CD8-positive, alpha-beta T cell (primary cell): ENCODE measurements at regions of chr1 and their contacts with region 1.

Region 1: GRCh38 chr1:27662707-27663393 is 9.1 kb downstream of the IFI6 start:
- DNase-seq: peak; percentile 82 to 96 (median 90)
- ATAC-seq: peak; percentile 72
- H3K4me3 ChIP-seq: peak overlapping the region; percentile 50 to 59
- H3K4me3 Mint-ChIP-seq: peak overlapping the region; percentile 81
- H3K27ac ChIP-seq: peak overlapping the region; percentile 87 to 95
- H3K27ac Mint-ChIP-seq: peak overlapping the region; percentile 97
- H3K4me1 ChIP-seq: peaks cover 46% of the 10 kb centered on the region
- H3K4me1 Mint-ChIP-seq: peaks cover 46% of the 10 kb centered on the region
- H3K27me3 ChIP-seq: no peaks in the 10 kb centered on the region
- H3K27me3 Mint-ChIP-seq: no peaks in the 10 kb centered on the region
- CTCF ChIP-seq: peak; percentile 74

Region 2: GRCh38 chr1:27201295-27201694 is 461.6 kb before region 1 on chr1:
- CTCF ChIA-PET with region 1: no interaction called
- POLR2A ChIA-PET with region 1: no interaction called
- intact Hi-C with region 1: no loop called
- DNase-seq: no peak
- ATAC-seq: no peak
- H3K4me3 ChIP-seq: no peak overlapping the region
- H3K4me3 Mint-ChIP-seq: no peak overlapping the region
- H3K27ac ChIP-seq: no peak overlapping the region
- H3K27ac Mint-ChIP-seq: no peak overlapping the region
- H3K4me1 ChIP-seq: no peaks in the 10 kb centered on the region
- H3K4me1 Mint-ChIP-seq: peaks cover 4% of the 10 kb centered on the region
- H3K27me3 ChIP-seq: no peaks in the 10 kb centered on the region
- H3K27me3 Mint-ChIP-seq: no peaks in the 10 kb centered on the region
- CTCF ChIP-seq: no peak

Region 3: GRCh38 chr1:27300341-27301051 is 362.4 kb before region 1 on chr1:
- CTCF ChIA-PET with region 1: interaction called, 6 read pairs
- POLR2A ChIA-PET with region 1: interaction called, 3 read pairs
- intact Hi-C with region 1: loop called in 1 of 2 experiments (anchors 5 kb)
- DNase-seq: peak; percentile 60 to 90 (median 74)
- ATAC-seq: peak; percentile 99
- H3K4me3 ChIP-seq: no peak overlapping the region
- H3K4me3 Mint-ChIP-seq: no peak overlapping the region
- H3K27ac ChIP-seq: no peak overlapping the region
- H3K27ac Mint-ChIP-seq: no peak overlapping the region
- H3K4me1 ChIP-seq: no peaks in the 10 kb centered on the region
- H3K4me1 Mint-ChIP-seq: peaks cover 6% of the 10 kb centered on the region
- H3K27me3 ChIP-seq: no peaks in the 10 kb centered on the region
- H3K27me3 Mint-ChIP-seq: no peaks in the 10 kb centered on the region
- CTCF ChIP-seq: peak; percentile 84

Region 4: DNA sequence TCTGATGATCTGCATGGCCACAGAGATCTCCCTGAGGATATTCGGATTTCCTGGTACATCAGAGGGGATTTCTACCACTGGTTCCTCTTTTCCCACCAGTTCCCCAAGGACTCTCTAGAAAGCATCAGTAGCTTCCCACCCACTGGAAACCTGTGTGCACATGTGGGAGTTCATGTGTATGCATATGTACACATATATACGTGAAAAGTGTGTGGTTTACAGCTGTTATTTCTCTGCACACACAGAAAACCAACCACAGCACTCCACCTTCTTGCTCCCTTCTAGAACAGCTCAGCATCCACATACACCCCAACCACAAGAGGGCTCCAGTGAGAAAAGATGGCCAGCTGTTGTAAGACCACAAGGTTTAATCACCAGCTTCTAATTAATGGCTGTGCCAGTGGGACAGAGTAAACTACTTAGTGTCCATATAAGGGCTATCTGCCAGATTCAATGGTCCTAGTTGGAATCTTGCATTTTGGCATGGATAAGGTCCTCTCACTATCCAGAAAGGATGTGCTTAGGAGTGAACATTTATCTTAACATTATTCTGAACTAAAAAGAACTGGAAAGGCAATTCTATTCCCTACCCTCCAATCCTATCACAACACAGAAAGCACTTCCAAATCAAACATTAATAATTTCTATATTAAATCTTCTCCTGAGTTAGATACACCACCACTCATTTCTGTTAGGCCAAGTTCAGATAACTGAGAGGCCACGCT is 246.3 kb before region 1 on chr1:
- CTCF ChIA-PET with region 1: interaction called, 3 read pairs
- POLR2A ChIA-PET with region 1: no interaction called
- intact Hi-C with region 1: loop called (anchors 1 kb)
- DNase-seq: peak in 6 of 9 experiments; percentile 30 to 81 (median 57)
- ATAC-seq: peak; percentile 74
- H3K4me3 ChIP-seq: no peak overlapping the region
- H3K4me3 Mint-ChIP-seq: no peak overlapping the region
- H3K27ac ChIP-seq: no peak overlapping the region
- H3K27ac Mint-ChIP-seq: peak overlapping the region; percentile 37
- H3K4me1 ChIP-seq: peaks cover 19% of the 10 kb centered on the region
- H3K4me1 Mint-ChIP-seq: peaks cover 33% of the 10 kb centered on the region
- H3K27me3 ChIP-seq: no peaks in the 10 kb centered on the region
- H3K27me3 Mint-ChIP-seq: no peaks in the 10 kb centered on the region
- CTCF ChIP-seq: peak; percentile 56

Region 5: GRCh38 chr1:27556781-27557595 is 105.9 kb before region 1 on chr1:
- CTCF ChIA-PET with region 1: interaction called, 31 read pairs
- POLR2A ChIA-PET with region 1: interaction called, 4 read pairs
- intact Hi-C with region 1: loop called (anchors 1 kb)
- DNase-seq: peak; percentile 62 to 85 (median 76)
- ATAC-seq: peak; percentile 96
- H3K4me3 ChIP-seq: no peak overlapping the region
- H3K4me3 Mint-ChIP-seq: peak overlapping the region; percentile 30
- H3K27ac ChIP-seq: no peak overlapping the region
- H3K27ac Mint-ChIP-seq: peak overlapping the region; percentile 58
- H3K4me1 ChIP-seq: peaks cover 24% of the 10 kb centered on the region
- H3K4me1 Mint-ChIP-seq: peaks cover 33% of the 10 kb centered on the region
- H3K27me3 ChIP-seq: no peaks in the 10 kb centered on the region
- H3K27me3 Mint-ChIP-seq: no peaks in the 10 kb centered on the region
- CTCF ChIP-seq: peak; percentile 95

Region 6: DNA sequence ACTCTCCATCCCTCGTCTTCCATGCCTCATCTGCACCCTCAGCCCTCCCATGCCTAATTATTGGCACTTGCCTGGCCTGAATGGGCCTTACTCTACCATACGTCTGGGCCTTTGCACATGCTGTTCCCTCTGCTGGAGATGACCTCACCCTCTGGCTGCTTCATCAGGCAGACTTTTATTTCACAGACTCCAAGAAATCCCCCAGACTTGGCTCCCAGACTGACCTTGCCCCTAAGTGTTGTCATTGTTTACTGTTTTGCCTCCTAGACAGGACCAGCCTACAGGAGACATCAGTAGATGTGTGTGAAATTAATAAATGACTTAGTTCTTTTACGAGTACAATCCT is 53.7 kb before region 1 on chr1:
- CTCF ChIA-PET with region 1: interaction called, 405 read pairs
- POLR2A ChIA-PET with region 1: interaction called, 40 read pairs
- intact Hi-C with region 1: loop called (anchors 1 kb)
- DNase-seq: peak in 2 of 9 experiments; percentile 49 to 64
- ATAC-seq: peak; percentile 9
- H3K4me3 ChIP-seq: no peak overlapping the region
- H3K4me3 Mint-ChIP-seq: no peak overlapping the region
- H3K27ac ChIP-seq: peak overlapping the region in 1 of 2 experiments; percentile 11
- H3K27ac Mint-ChIP-seq: no peak overlapping the region
- H3K4me1 ChIP-seq: peaks cover 61% of the 10 kb centered on the region
- H3K4me1 Mint-ChIP-seq: peaks cover 34% of the 10 kb centered on the region
- H3K27me3 ChIP-seq: no peaks in the 10 kb centered on the region
- H3K27me3 Mint-ChIP-seq: no peaks in the 10 kb centered on the region
- CTCF ChIP-seq: no peak

Region 7: DNA sequence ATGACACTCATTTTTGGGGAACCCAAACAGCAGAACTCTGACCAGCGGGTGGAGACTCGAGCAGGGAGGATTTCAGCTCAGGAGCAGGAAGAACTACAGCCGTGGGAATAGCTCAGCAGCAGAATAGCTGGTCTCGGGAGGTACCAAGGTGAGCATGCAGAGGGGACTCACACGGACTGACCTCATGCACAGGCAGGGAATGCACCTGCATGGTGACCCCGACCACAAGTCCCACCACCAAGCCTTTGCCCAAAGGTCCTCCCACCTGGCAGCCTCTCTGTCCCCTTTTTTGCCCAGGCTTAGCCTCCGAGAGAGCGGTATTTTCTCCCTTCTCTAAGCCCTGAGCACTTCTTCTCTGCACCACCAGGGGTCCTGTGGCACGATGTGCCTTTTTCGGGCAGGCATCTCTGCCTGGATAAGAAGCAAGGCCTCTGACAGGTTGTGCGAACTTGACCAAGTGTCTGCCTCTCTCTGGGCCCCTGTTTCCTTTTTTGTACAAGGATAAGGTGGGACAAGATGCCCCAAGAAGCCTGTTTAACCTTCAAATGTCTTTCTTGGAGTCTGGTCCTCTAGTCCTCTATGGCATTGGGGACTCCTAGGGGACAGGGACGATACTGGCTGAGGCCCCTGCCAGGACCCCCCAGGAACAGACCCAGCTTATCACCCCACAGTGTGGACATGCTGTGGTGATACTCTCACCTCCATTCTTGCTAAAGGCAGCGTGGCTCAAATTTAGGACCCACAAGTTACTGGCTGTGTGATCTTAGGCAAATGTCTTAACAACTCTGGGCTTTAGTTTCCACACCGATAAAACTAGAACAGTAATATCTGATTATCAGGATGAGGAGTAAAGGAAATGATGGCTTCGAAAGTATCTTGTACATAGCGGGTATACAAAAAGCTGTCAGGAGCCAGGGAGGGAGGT is 18.9 kb before region 1 on chr1:
- CTCF ChIA-PET with region 1: interaction called, 50 read pairs
- POLR2A ChIA-PET with region 1: interaction called, 10 read pairs
- intact Hi-C with region 1: loop called (anchors 1 kb)
- DNase-seq: peak; percentile 45 to 87 (median 75)
- ATAC-seq: peak; percentile 99
- H3K4me3 ChIP-seq: no peak overlapping the region
- H3K4me3 Mint-ChIP-seq: no peak overlapping the region
- H3K27ac ChIP-seq: peak overlapping the region in 1 of 2 experiments; percentile 27
- H3K27ac Mint-ChIP-seq: peak overlapping the region; percentile 37
- H3K4me1 ChIP-seq: peaks cover 18% of the 10 kb centered on the region
- H3K4me1 Mint-ChIP-seq: peaks cover 19% of the 10 kb centered on the region
- H3K27me3 ChIP-seq: no peaks in the 10 kb centered on the region
- H3K27me3 Mint-ChIP-seq: no peaks in the 10 kb centered on the region
- CTCF ChIP-seq: peak; percentile 86

Region 8: GRCh38 chr1:27713139-27713725 is 50.4 kb after region 1 on chr1:
- CTCF ChIA-PET with region 1: no interaction called
- POLR2A ChIA-PET with region 1: no interaction called
- intact Hi-C with region 1: no loop called
- DNase-seq: no peak
- ATAC-seq: no peak
- H3K4me3 ChIP-seq: no peak overlapping the region
- H3K4me3 Mint-ChIP-seq: no peak overlapping the region
- H3K27ac ChIP-seq: no peak overlapping the region
- H3K27ac Mint-ChIP-seq: no peak overlapping the region
- H3K4me1 ChIP-seq: no peaks in the 10 kb centered on the region
- H3K4me1 Mint-ChIP-seq: peaks cover 12% of the 10 kb centered on the region
- H3K27me3 ChIP-seq: peaks cover 0 to 9% of the 10 kb centered on the region in 2 experiments
- H3K27me3 Mint-ChIP-seq: peaks cover 19% of the 10 kb centered on the region
- CTCF ChIP-seq: no peak

Region 9: GRCh38 chr1:27725374-27726173 is 62.7 kb after region 1 on chr1 and contains the start of gene FAM76A:
- CTCF ChIA-PET with region 1: interaction called, 13 read pairs
- POLR2A ChIA-PET with region 1: interaction called, 4 read pairs
- intact Hi-C with region 1: no loop called
- DNase-seq: peak; percentile 99 to 100 (median 99)
- ATAC-seq: peak; percentile 92
- H3K4me3 ChIP-seq: peak within 1 kb of the TSS; percentile 63 to 92
- H3K4me3 Mint-ChIP-seq: peak within 1 kb of the TSS; percentile 84
- H3K27ac ChIP-seq: peak within 1 kb of the TSS; percentile 94 to 96
- H3K27ac Mint-ChIP-seq: peak within 1 kb of the TSS; percentile 94
- H3K4me1 ChIP-seq: peaks cover 15% of the 10 kb centered on the region
- H3K4me1 Mint-ChIP-seq: peaks cover 26% of the 10 kb centered on the region
- H3K27me3 ChIP-seq: no peaks in the 10 kb centered on the region
- H3K27me3 Mint-ChIP-seq: no peaks in the 10 kb centered on the region
- CTCF ChIP-seq: peak; percentile 25
- total RNA-seq, gene FAM76A: 29.5 to 31.7 TPM